ENCODE measurements at regions of chr10 and their contacts with region 1.

Region 1: GRCh38 chr10:96229568-96230030 is 41.8 kb downstream of the BLNK start:
- DNase-seq: peak; percentile 51 to 60 (median 53)
- H3K4me3 ChIP-seq: no peak overlapping the region
- H3K4me3 Mint-ChIP-seq: no peak overlapping the region
- H3K27ac ChIP-seq: no peak overlapping the region
- H3K27ac Mint-ChIP-seq: peak overlapping the region in 4 of 7 donors; percentile 3 to 88 (median 60)
- H3K4me1 ChIP-seq: no peaks in the 10 kb centered on the region
- H3K4me1 Mint-ChIP-seq: peaks cover 0 to 4% (median 2%) of the 10 kb centered on the region in 4 donors
- H3K27me3 ChIP-seq: no peaks in the 10 kb centered on the region
- H3K27me3 Mint-ChIP-seq: peaks cover 2 to 4% of the 10 kb centered on the region in 2 donors

Region 2: DNA sequence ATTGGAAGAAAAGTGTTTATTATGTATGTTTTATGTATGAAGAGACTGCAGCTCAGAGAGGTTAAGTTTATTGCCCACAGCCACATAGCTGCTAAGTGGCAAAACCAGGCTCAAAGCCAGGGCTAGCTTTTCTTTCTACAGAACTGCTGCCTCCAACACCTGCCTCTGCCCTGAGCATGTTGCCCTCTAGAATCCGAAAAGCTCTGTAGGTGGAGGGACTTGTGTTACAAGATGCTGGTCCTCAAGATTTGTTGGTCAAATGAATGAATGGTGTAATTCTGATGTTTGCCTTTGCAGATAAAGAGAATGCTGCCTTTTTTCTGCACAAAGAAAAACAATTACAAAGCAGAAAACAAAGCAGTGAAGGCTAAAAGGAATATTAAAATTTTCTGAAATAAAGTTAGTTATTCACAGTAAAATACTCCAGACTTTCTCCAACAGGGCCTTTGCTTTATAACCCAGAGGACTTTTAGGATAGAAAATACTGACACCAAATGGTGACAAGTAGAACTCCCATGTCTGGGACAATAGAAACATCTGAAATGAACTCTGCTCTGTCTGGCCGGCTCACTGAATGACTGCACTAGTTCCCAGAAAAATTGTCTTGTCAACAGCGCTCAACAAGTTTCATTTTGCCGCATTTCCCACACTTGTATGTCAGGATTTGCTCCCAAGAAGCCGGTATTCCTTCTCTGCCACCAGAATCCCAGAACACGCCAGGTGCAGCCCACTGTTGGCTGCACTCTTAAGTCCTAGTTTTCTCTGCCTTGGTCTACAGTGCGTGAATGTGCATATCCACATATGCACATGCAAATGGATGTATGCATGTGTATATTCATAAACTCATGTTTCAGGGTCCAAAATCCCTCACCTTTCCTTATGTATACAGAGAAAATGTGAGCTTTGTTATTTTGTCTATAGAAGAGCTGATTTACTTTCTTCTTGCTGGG is 63.6 kb after region 1 on chr10:
- CTCF ChIA-PET with region 1: interaction called, 52 read pairs
- POLR2A ChIA-PET with region 1: no interaction called
- intact Hi-C with region 1: no loop called
- DNase-seq: peak in 2 of 5 donors; percentile 3
- H3K4me3 ChIP-seq: no peak overlapping the region
- H3K4me3 Mint-ChIP-seq: no peak overlapping the region
- H3K27ac ChIP-seq: no peak overlapping the region
- H3K27ac Mint-ChIP-seq: no peak overlapping the region
- H3K4me1 ChIP-seq: no peaks in the 10 kb centered on the region
- H3K4me1 Mint-ChIP-seq: peaks cover 0 to 11% (median 3%) of the 10 kb centered on the region in 4 donors
- H3K27me3 ChIP-seq: no peaks in the 10 kb centered on the region
- H3K27me3 Mint-ChIP-seq: peaks cover 9 to 33% of the 10 kb centered on the region in 2 donors

Region 3: DNA sequence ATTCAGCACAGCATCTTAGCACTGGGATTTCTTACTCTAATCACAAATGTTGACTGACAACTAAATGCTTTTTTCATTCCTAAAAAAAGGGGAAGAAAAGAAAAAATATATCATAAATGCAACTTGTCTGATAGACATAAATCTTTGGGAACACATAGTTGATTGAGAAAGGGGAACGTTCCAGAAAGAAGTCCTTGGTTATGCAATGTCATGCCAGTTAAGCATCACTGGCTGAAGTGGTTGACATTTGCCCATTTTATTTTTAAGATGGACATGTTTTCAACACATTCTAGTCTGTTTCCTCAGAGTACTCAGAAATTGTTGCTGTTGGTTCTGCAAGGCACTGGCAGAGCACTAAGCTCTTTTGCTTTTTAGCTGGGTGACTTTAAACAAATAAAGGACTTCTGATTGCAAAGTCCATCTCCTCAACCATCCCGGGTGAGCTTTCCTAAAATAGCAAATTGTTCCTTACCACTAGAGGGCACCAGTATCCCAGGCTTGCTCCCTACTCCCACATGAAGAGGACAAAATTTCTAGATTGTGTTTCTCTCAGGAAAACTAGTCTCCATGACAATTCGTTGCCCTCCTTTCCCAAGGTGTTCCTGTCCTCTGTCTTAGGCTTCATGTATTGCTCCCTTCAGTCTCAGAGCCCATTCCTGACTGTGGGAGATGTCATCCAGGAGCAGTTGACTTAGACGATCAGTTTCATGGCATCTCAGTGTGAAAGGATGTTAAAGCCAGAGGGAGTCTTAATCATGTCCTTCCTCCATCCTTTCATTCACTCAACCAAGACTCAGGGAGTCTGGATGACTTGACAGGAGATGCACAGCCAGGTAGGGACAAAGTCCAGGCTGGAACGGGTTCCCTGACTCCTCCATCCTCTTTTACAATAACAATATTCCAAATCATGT is 105.3 kb after region 1 on chr10:
- CTCF ChIA-PET with region 1: interaction called, 23 read pairs
- POLR2A ChIA-PET with region 1: no interaction called
- intact Hi-C with region 1: loop called (anchors 1 kb)
- DNase-seq: peak in 1 of 5 donors; percentile 16
- H3K4me3 ChIP-seq: no peak overlapping the region
- H3K4me3 Mint-ChIP-seq: no peak overlapping the region
- H3K27ac ChIP-seq: no peak overlapping the region
- H3K27ac Mint-ChIP-seq: no peak overlapping the region
- H3K4me1 ChIP-seq: peaks cover 14% of the 10 kb centered on the region
- H3K4me1 Mint-ChIP-seq: peaks cover 13 to 18% (median 13%) of the 10 kb centered on the region in 4 donors
- H3K27me3 ChIP-seq: peaks cover 9% of the 10 kb centered on the region
- H3K27me3 Mint-ChIP-seq: peaks cover 8 to 35% of the 10 kb centered on the region in 2 donors

Region 4: DNA sequence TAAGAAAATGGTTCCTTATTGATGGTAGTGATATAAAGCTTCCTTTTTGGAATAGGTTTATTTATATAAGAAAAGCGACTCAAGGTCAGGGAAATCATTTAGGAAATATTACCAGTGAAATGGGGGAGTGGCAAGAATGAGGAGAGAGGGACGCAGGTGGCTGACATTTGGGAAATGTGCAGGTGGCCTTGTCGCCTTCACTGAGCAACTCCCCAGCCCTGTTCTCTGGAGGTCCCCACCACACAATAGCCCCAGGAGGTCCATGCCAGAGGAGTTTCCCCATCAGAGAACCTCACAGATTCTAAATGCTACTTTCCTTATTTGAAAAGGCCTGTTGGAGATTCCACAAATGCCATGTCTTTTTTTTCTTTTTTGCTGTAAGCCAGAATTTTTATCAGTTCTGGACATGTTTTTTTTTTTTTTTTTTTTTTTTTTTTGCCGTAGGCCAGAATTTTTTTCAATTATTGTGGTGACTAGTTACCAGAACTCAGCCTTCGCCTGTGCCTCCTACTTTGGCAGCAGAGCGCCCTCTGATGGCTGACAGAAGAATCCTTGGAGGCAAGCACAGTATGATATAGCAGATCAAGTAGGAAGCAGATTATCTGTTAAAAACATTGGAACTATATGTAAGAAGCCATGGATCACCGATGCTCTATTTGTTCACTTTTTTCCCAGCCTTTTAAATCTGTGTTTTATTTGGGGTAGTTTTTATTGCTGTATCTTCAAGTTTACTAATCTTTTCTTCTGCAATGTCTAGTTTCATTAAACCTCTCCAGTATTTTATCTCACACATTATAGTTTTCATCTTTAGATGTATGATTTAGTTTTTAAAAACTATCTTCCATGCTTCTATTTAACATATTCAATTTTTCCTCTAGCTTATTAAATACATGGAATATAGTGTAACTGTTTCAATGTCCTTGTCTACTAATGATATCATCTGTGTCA is 110.6 kb after region 1 on chr10:
- CTCF ChIA-PET with region 1: interaction called, 23 read pairs
- POLR2A ChIA-PET with region 1: no interaction called
- intact Hi-C with region 1: loop called (anchors 1 kb)
- DNase-seq: peak in 4 of 5 donors; percentile 30 to 51 (median 45)
- H3K4me3 ChIP-seq: no peak overlapping the region
- H3K4me3 Mint-ChIP-seq: no peak overlapping the region
- H3K27ac ChIP-seq: no peak overlapping the region
- H3K27ac Mint-ChIP-seq: no peak overlapping the region
- H3K4me1 ChIP-seq: no peaks in the 10 kb centered on the region
- H3K4me1 Mint-ChIP-seq: no peaks in the 10 kb centered on the region
- H3K27me3 ChIP-seq: peaks cover 2% of the 10 kb centered on the region
- H3K27me3 Mint-ChIP-seq: peaks cover 2 to 23% of the 10 kb centered on the region in 2 donors

Region 5: GRCh38 chr10:96840841-96841518 is 611.4 kb after region 1 on chr10:
- CTCF ChIA-PET with region 1: no interaction called
- POLR2A ChIA-PET with region 1: no interaction called
- intact Hi-C with region 1: no loop called
- DNase-seq: no peak
- H3K4me3 ChIP-seq: no peak overlapping the region
- H3K4me3 Mint-ChIP-seq: peak overlapping the region in 1 of 8 donors; percentile 24
- H3K27ac ChIP-seq: no peak overlapping the region
- H3K27ac Mint-ChIP-seq: no peak overlapping the region
- H3K4me1 ChIP-seq: peaks cover 64% of the 10 kb centered on the region
- H3K4me1 Mint-ChIP-seq: peaks cover 48 to 75% (median 62%) of the 10 kb centered on the region in 4 donors
- H3K27me3 ChIP-seq: no peaks in the 10 kb centered on the region
- H3K27me3 Mint-ChIP-seq: no peaks in the 10 kb centered on the region

Measured in CD4-positive, alpha-beta memory T cell (primary cell).